ENCODE measurements at regions of chr12 and their contacts with region 1.

Region 1: GRCh38 chr12:78146365-78146772 is 315.7 kb downstream of the NAV3 start:
- DNase-seq: no peak
- ATAC-seq: no peak

Region 2: DNA sequence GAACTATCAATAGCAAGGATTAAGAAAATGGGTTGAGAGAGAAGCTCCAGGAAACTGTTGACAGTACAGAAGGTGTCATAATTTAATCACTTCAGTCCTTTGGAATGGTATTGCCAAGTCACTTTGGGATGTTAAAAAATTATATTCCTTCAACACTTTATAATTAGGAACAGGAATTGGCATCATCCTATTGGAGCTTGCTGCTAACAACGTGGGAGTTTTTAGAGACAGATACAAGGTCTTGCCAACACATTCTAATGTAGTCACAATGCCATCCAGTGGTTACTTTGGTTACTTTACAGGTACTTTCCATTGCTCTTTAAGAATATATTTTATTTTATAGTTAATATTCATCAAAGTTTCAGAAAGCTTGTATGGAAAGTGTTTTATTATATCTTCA is 1028.3 kb after region 1 on chr12:
- intact Hi-C with region 1: loop called in 1 of 2 experiments (anchors 5 kb)
- DNase-seq: no peak
- ATAC-seq: peak in 1 of 2 donors; percentile 73

Measured in left cardiac atrium (tissue), 4 donors.